Prostate gland (tissue), 2 donors: ENCODE measurements at regions of chr11 and their contacts with region 1.

Region 1: DNA sequence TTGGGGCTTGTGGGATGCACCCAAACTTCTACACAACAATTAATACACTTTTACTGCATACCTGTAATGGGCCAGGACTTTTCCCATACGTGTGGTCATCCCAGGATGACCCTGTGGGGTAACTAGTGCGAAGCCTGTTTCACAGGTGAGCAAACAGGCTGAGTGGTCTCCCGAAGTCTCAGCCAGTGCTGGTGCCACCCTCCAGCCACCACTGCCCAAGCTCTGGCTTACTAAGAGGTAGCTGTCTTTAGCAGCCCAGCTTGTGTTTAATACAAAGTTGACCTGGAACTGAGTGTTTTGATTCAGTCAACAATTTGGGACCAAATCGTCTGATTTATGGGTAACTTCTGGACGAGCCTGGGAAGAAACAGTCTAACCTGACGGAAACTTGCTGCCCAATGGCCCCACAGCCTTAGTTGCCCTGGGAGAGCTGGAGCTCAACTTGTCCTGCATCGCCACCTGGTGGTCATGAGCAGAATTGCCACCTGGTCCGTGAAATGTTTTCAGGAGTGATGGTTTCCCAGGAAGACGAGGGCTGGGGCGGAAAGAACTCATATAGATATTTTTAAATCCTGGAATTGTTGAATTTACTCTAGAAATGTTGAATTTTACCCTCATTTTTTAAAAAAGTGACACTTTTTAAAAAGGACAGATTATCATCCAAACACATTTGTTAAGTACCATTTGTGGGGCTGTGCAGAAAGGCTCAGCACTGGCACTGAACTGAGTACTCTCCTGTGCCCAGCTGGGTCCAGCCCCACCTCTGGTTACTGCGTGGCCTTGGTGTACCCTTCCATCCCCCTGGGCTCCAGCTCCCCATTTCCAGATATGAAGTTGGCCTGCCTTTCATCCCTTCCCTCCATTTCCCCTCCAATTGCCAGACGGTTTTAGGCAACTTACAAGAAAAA is 95.5 kb upstream of the PARVA start:
- DNase-seq: peak; percentile 87
- H3K4me3 ChIP-seq: no peak overlapping the region
- H3K27ac ChIP-seq: no peak overlapping the region
- H3K4me1 ChIP-seq: no peaks in the 10 kb centered on the region
- H3K27me3 ChIP-seq: no peaks in the 10 kb centered on the region
- CTCF ChIP-seq: peak; percentile 98 to 99 (median 99)
- POLR2A ChIP-seq: no peak

Region 2: GRCh38 chr11:11798586-11799438 is 483.0 kb before region 1 on chr11:
- intact Hi-C with region 1: loop called (anchors 5 kb)
- DNase-seq: peak; percentile 62
- H3K4me3 ChIP-seq: no peak overlapping the region
- H3K27ac ChIP-seq: no peak overlapping the region
- H3K4me1 ChIP-seq: no peaks in the 10 kb centered on the region
- H3K27me3 ChIP-seq: no peaks in the 10 kb centered on the region
- CTCF ChIP-seq: peak; percentile 65 to 87 (median 76)
- POLR2A ChIP-seq: no peak

Region 3: DNA sequence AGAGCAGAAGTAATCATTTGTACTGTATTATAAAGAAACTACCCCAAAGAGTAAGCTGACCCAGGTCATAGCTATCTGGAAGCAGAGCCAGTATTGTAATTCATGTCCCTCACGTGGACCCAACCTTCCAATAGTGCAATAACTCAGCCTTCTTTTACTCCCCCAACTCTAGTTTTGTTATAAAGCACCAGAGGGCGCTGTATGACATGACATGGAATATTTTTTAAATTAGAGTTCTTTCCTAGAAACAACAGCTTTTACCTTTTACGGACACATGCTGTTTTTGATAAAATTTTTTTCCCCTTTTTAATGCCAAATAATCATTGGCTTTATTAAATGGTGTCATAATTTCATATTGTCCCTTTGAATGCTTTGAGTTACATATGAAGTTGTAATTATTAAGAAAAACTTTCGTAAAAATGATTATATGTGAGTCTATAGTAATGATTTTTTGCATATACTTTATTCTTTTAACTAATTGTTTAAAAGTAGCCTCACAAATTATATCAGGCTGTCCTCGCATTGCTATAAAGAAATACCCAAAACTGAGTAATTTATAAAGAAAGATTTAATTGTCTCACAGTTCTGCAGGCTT is 350.3 kb before region 1 on chr11:
- intact Hi-C with region 1: loop called (anchors 5 kb)
- DNase-seq: peak; percentile 12
- H3K4me3 ChIP-seq: no peak overlapping the region
- H3K27ac ChIP-seq: no peak overlapping the region
- H3K4me1 ChIP-seq: no peaks in the 10 kb centered on the region
- H3K27me3 ChIP-seq: no peaks in the 10 kb centered on the region
- CTCF ChIP-seq: peak; percentile 14 to 74 (median 59)
- POLR2A ChIP-seq: no peak

Region 4: GRCh38 chr11:12377824-12378593 is 96.2 kb after region 1 on chr11:
- intact Hi-C with region 1: no loop called
- DNase-seq: peak; percentile 58
- H3K4me3 ChIP-seq: peak overlapping the region; percentile 68 to 77
- H3K27ac ChIP-seq: peak overlapping the region; percentile 95 to 97
- H3K4me1 ChIP-seq: no peaks in the 10 kb centered on the region
- H3K27me3 ChIP-seq: no peaks in the 10 kb centered on the region
- CTCF ChIP-seq: peak in 2 of 4 experiments; percentile 26 to 42
- POLR2A ChIP-seq: no peak